ENCODE measurements at regions of chr16 and their contacts with region 1.

Region 1: GRCh38 chr16:35664091-35664693 is 2204.8 kb downstream of the TP53TG3F start:
- DNase-seq: no peak
- ATAC-seq: no peak
- H3K4me3 Mint-ChIP-seq: no peak overlapping the region
- H3K27ac Mint-ChIP-seq: no peak overlapping the region
- H3K4me1 Mint-ChIP-seq: no peaks in the 10 kb centered on the region
- H3K27me3 Mint-ChIP-seq: no peaks in the 10 kb centered on the region

Region 2: GRCh38 chr16:35599429-35600165 is 64.6 kb before region 1 on chr16:
- CTCF ChIA-PET with region 1: no interaction called
- POLR2A ChIA-PET with region 1: no interaction called
- intact Hi-C with region 1: loop called in 1 of 2 experiments (anchors 5 kb)
- DNase-seq: no peak
- ATAC-seq: no peak
- H3K4me3 Mint-ChIP-seq: no peak overlapping the region
- H3K27ac Mint-ChIP-seq: no peak overlapping the region
- H3K4me1 Mint-ChIP-seq: no peaks in the 10 kb centered on the region
- H3K27me3 Mint-ChIP-seq: no peaks in the 10 kb centered on the region

Region 3: DNA sequence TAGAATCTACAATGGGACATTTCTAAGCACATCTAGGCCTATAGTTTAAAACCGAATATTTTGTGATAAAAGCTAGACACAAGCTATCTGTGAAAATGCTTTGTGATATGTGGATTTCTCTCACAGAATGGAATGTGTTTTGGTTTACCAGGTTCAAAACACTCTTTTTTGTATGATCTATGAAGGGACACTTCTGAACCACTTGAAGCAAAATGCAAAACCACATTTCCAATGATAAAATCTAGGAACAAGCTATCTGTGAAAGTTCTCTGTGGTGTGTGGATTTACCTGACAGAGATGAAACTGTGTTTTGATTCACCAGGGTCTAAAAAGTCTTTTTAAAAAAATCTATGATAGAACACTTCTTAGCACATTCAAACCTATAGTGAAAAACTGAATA is 12.4 kb before region 1 on chr16:
- CTCF ChIA-PET with region 1: no interaction called
- POLR2A ChIA-PET with region 1: no interaction called
- intact Hi-C with region 1: no loop called
- DNase-seq: no peak
- ATAC-seq: no peak
- H3K4me3 Mint-ChIP-seq: no peak overlapping the region
- H3K27ac Mint-ChIP-seq: no peak overlapping the region
- H3K4me1 Mint-ChIP-seq: no peaks in the 10 kb centered on the region
- H3K27me3 Mint-ChIP-seq: no peaks in the 10 kb centered on the region